Activated B cell treated with CpG ODN at 0.5 μM for 24 hours (primary cell): ENCODE measurements at regions of chr18 and their contacts with region 1.

Region 1: GRCh38 chr18:2571200-2572143 is at the starts of genes METTL4 and NDC80:
- DNase-seq: peak; percentile 82
- ATAC-seq: peak; percentile 93
- H3K4me3 Mint-ChIP-seq: peak within 1 kb of the TSS; percentile 100
- H3K27ac Mint-ChIP-seq: peak within 1 kb of the TSS; percentile 99
- H3K4me1 Mint-ChIP-seq: peaks cover 50% of the 10 kb centered on the region
- H3K27me3 Mint-ChIP-seq: no peaks in the 10 kb centered on the region
- CTCF ChIP-seq: no peak
- total RNA-seq, gene METTL4: 17.4 TPM in 2 replicates
- total RNA-seq, gene NDC80: 1.9 and 2.6 TPM in 2 replicates

Region 2: DNA sequence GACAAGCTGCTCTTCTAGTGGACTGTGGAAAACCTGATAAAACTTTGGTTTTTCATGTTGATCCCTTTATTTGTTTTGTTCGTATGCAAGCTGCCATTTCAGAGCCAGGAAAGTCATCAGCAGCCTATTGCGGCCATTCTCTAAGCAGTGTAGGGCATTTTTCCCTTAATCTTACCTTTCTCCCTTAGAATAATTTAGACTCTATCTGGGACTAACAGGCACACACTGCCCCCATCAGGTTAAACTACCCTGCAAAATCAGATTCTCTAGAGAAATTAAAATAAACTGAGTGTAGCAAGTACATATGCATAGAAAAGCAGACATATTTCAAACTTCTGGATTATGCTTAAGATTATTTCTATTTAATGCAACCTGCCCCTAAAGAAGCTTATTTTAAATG is 347.6 kb before region 1 on chr18:
- CTCF ChIA-PET with region 1: no interaction called
- POLR2A ChIA-PET with region 1: no interaction called
- intact Hi-C with region 1: no loop called
- DNase-seq: no peak
- ATAC-seq: no peak
- H3K4me3 Mint-ChIP-seq: no peak overlapping the region
- H3K27ac Mint-ChIP-seq: no peak overlapping the region
- H3K4me1 Mint-ChIP-seq: no peaks in the 10 kb centered on the region
- H3K27me3 Mint-ChIP-seq: peaks cover 6% of the 10 kb centered on the region
- CTCF ChIP-seq: no peak

Region 3: GRCh38 chr18:2589345-2590068 is 18.0 kb after region 1 on chr18:
- CTCF ChIA-PET with region 1: no interaction called
- POLR2A ChIA-PET with region 1: interaction called, 7 read pairs
- intact Hi-C with region 1: loop called (anchors 2 kb)
- DNase-seq: no peak
- ATAC-seq: peak; percentile 80
- H3K4me3 Mint-ChIP-seq: peak overlapping the region; percentile 46
- H3K27ac Mint-ChIP-seq: peak overlapping the region; percentile 74
- H3K4me1 Mint-ChIP-seq: peaks cover 22% of the 10 kb centered on the region
- H3K27me3 Mint-ChIP-seq: no peaks in the 10 kb centered on the region
- CTCF ChIP-seq: no peak

Region 4: GRCh38 chr18:2636126-2636631 is 64.7 kb after region 1 on chr18:
- CTCF ChIA-PET with region 1: interaction called, 6 read pairs
- POLR2A ChIA-PET with region 1: interaction called, 54 read pairs
- intact Hi-C with region 1: loop called (anchors 1 kb)
- DNase-seq: no peak
- ATAC-seq: peak; percentile 11
- H3K4me3 Mint-ChIP-seq: peak overlapping the region; percentile 72
- H3K27ac Mint-ChIP-seq: peak overlapping the region; percentile 99
- H3K4me1 Mint-ChIP-seq: peaks cover 96% of the 10 kb centered on the region
- H3K27me3 Mint-ChIP-seq: no peaks in the 10 kb centered on the region
- CTCF ChIP-seq: no peak

Region 5: DNA sequence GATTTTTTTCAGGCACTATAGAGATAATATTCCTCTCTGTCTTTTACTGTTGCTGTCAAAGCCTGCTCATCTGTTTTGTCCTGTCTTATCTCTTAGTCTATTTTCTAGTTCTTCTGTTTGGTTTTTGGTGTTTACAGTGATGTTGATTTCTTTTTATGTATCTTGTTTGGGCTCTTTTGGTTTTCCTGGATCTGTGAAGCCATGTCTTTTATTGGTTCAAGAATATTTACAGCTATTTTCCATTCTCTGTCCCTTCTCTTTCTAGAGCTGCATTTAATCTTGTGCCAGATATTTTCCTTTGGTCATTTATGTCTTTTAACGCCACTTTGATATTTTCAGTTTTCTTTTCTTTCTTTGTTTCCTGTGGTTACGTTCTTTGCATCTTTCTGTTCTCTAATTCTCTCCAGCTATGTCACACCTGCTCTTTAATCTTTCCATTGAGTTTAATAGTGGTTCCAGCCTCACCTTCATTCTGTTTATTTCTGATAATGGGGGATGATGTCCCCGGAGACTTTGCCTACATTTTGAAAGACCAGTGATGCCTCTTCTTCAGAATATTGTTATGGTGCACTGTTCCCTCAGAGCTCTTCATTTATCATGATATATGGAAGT is 116.0 kb after region 1 on chr18:
- CTCF ChIA-PET with region 1: no interaction called
- POLR2A ChIA-PET with region 1: interaction called, 9 read pairs
- intact Hi-C with region 1: loop called (anchors 1 kb)
- DNase-seq: no peak
- ATAC-seq: peak; percentile 42
- H3K4me3 Mint-ChIP-seq: peak overlapping the region; percentile 69
- H3K27ac Mint-ChIP-seq: peak overlapping the region; percentile 88
- H3K4me1 Mint-ChIP-seq: peaks cover 52% of the 10 kb centered on the region
- H3K27me3 Mint-ChIP-seq: no peaks in the 10 kb centered on the region
- CTCF ChIP-seq: no peak

Region 6: GRCh38 chr18:3261371-3262246 is 690.1 kb after region 1 on chr18 and contains the start of gene MYL12B:
- CTCF ChIA-PET with region 1: no interaction called
- POLR2A ChIA-PET with region 1: no interaction called
- intact Hi-C with region 1: loop called (anchors 5 kb)
- DNase-seq: peak; percentile 81
- ATAC-seq: peak; percentile 83
- H3K4me3 Mint-ChIP-seq: peak within 1 kb of the TSS; percentile 94
- H3K27ac Mint-ChIP-seq: peak within 1 kb of the TSS; percentile 97
- H3K4me1 Mint-ChIP-seq: peaks cover 80% of the 10 kb centered on the region
- H3K27me3 Mint-ChIP-seq: no peaks in the 10 kb centered on the region
- CTCF ChIP-seq: no peak
- total RNA-seq, gene MYL12B: 185 and 198 TPM in 2 replicates